Left cardiac atrium (tissue), 4 donors: ENCODE measurements at regions of chr3 and their contacts with region 1.

Region 1: GRCh38 chr3:19866751-19867347 is 67.2 kb downstream of the EFHB start:
- DNase-seq: no peak
- ATAC-seq: peak; percentile 57 to 68

Region 2: DNA sequence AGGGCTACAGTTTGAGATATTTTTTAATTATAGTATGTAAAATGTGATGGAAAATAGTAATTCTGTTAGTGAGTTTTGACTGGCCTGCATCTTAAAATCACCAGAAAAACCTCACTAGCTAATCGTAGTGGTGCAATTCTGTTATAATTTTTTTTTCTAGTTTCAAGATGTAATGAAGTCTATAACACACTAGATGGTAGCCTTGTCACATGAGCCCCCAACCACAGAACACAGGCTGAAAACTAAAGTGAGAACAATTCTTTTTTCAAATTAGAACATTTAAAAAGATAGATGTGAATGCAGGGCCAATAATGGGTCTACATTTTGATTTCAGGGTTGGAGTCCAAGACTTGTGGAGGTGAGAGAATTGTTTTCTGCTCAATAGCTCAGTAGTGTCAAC is 801.8 kb before region 1 on chr3:
- intact Hi-C with region 1: loop called in 1 of 2 experiments (anchors 10 kb)
- DNase-seq: no peak
- ATAC-seq: no peak

Region 3: GRCh38 chr3:19348929-19349564 is 517.8 kb before region 1 on chr3:
- intact Hi-C with region 1: loop called (anchors 5 to 10 kb)
- DNase-seq: no peak
- ATAC-seq: no peak